AG04449 (cell line): ENCODE measurements at regions of chr14 and their contacts with region 1.

Region 1: DNA sequence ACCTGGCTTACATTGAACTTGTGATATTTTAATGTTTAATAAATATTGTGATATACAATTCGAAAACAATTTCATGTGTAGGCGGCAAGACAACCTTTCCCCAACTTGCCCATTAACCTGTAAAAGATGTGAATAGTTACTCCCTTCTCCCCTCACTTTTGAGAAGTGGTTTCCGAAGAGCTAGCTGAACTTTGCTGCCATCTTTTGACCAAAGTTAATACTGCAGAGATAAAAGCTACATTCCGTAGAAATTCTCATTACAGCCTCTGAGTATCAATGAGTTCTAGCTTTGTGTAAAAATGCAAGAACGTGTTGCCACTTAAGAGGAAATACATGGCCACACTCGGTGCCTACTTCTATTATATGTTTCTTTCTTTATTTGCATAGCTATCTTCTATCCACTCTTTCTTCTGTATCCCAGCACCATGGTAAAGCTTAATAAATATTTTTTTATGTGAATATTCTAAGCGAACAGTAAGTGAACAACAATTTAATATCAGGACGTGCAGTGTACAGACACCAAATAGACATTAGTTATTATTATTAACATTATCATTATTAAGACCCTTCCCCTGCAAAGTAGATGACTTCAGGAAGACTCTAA is 105.1 kb upstream of the TMEM260 start:
- DNase-seq: no peak
- H3K4me3 ChIP-seq: no peak overlapping the region
- CTCF ChIP-seq: peak; percentile 51

Region 2: DNA sequence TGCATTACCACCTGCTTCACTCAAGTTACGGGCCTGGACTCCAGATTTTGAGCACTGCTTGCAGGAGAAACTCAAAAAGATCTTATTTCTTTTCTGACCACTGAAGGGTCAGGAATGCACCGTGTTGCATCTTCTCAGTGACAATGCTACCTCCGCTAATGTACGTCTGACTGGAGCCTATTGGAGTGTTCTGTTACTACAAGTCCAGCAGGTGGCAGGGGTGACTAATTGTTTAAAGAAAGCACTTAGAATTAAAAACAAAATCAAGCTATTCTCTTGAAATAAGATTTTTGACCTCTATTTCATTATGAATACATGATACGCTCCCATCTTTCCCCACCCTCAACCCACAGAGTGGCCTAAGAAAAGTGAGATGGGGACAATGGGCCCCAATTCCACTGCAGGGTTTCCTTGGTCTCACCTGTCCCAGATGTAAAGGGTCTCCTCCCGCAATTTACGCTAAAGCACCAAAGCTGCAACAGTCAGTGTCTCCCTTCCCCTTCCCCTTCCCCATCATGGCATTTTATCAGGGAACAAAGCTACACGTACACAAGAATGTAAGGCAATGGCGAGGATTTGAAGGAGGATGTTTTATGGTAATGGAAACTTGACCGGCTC is 1036.3 kb before region 1 on chr14:
- CTCF ChIA-PET with region 1: interaction called, 92 read pairs
- POLR2A ChIA-PET with region 1: no interaction called
- DNase-seq: no peak
- H3K4me3 ChIP-seq: no peak overlapping the region
- CTCF ChIP-seq: peak; percentile 41

Region 3: DNA sequence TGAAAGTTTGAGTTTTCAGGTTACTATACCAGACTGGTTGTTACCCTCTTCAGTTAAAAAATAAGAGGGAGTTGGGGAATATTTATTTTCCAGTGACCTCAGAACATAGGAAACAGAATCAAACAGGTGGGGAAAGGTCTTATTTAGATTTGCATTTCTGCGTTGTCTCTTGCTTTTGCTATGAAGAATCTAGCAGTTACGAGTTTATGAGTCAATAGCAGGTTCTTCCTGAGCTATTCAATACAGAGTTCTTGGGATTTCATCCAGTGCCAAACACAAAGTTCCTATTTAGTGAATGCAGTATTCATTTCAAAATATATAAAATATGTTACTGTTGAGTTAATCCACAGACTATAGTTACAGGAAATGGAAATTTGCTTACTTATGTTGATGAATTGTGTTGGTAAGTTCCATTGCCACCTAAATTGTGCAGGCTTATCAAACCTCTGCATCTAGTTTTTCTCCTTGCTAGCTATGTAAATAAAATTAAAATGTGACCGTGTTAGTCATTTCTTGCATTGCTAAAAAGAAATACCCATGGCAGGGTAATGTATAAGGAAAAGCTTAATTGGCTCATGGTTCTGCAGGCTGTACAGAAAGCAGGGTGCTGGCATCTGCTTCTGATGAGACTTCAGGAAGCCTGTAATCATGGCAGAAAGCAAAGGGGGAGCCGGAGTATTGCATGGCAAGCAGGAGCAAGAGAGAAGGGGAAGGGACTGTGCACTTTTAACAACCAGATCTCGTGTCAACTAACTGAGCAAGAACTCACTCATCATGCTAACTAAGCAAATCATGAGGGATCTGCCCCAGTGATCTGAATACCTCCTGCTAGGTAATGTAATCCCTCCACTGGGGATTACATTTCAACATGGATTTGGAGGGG is 784.3 kb before region 1 on chr14:
- CTCF ChIA-PET with region 1: interaction called, 10 read pairs
- POLR2A ChIA-PET with region 1: no interaction called
- DNase-seq: no peak
- H3K4me3 ChIP-seq: no peak overlapping the region
- CTCF ChIP-seq: no peak

Region 4: DNA sequence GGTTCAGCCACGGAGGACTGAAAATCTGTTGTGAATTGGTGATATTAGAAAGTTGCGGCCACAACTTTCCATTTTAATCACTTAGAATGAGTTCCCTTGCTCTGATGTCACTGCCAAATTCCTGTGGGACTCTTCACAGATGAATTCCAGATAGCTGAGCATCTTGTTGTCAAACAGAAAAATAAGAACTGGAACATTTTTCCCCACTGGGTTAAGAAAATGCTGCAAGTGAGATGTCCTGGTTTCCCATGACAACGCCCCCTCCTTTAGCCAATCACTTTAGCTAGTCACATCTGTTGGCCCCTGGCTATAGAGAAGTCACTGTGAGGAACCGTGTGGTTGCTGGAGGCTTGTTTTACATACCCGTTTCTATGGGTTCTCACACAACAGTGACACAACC is 758.6 kb before region 1 on chr14:
- CTCF ChIA-PET with region 1: interaction called, 20 read pairs
- POLR2A ChIA-PET with region 1: no interaction called
- DNase-seq: peak; percentile 76
- H3K4me3 ChIP-seq: no peak overlapping the region
- CTCF ChIP-seq: no peak

Region 5: GRCh38 chr14:56463271-56463890 is 11.1 kb before region 1 on chr14:
- CTCF ChIA-PET with region 1: interaction called, 12 read pairs
- POLR2A ChIA-PET with region 1: no interaction called
- DNase-seq: no peak
- H3K4me3 ChIP-seq: no peak overlapping the region
- CTCF ChIP-seq: no peak